Motor neuron (in vitro differentiated cells): ENCODE measurements at regions of chr2 and their contacts with region 1.

Region 1: GRCh38 chr2:165953655-165954606 is at the start of gene TTC21B:
- ATAC-seq: peak; percentile 92 to 97 (median 96)
- H3K4me3 ChIP-seq: peak within 1 kb of the TSS; percentile 54 to 89 (median 57)
- H3K27ac ChIP-seq: peak within 1 kb of the TSS; percentile 75 to 84
- H3K4me1 ChIP-seq: peaks cover 3 to 19% of the 10 kb centered on the region in 2 donors
- total RNA-seq, gene TTC21B: 17.3 to 65.3 (median 25.6) TPM

Region 2: GRCh38 chr2:165857876-165858275 is 96.1 kb before region 1 on chr2:
- in situ Hi-C with region 1: no loop called
- ATAC-seq: no peak
- H3K4me3 ChIP-seq: no peak overlapping the region
- H3K27ac ChIP-seq: no peak overlapping the region
- H3K4me1 ChIP-seq: peaks cover 1 to 3% of the 10 kb centered on the region in 2 donors

Region 3: GRCh38 chr2:166106431-166107015 is 152.6 kb after region 1 on chr2:
- in situ Hi-C with region 1: loop called in 2 of 9 experiments (anchors 25 kb)
- ATAC-seq: peak in 4 of 8 experiments; percentile 28 to 83 (median 53)
- H3K4me3 ChIP-seq: no peak overlapping the region
- H3K27ac ChIP-seq: no peak overlapping the region
- H3K4me1 ChIP-seq: no peaks in the 10 kb centered on the region

Region 4: GRCh38 chr2:166127217-166128155 is 173.6 kb after region 1 on chr2 and contains the start of gene SCN1A:
- in situ Hi-C with region 1: loop called in 5 of 9 experiments (anchors 25 kb)
- ATAC-seq: peak; percentile 6 to 73 (median 54)
- H3K4me3 ChIP-seq: peak within 1 kb of the TSS in 4 of 5 donors; percentile 3 to 26 (median 21)
- H3K27ac ChIP-seq: no peak within 1 kb of the TSS
- H3K4me1 ChIP-seq: peaks cover 11 to 21% of the 10 kb centered on the region in 2 donors
- total RNA-seq, gene SCN1A: 0.10 to 50.7 (median 4.1) TPM

Region 5: GRCh38 chr2:166180951-166181812 is 227.3 kb after region 1 on chr2:
- in situ Hi-C with region 1: loop called in 1 of 9 experiments (anchors 25 kb)
- ATAC-seq: peak; percentile 42 to 94 (median 67)
- H3K4me3 ChIP-seq: no peak overlapping the region
- H3K27ac ChIP-seq: no peak overlapping the region
- H3K4me1 ChIP-seq: no peaks in the 10 kb centered on the region